ENCODE measurements at regions of chr16 and their contacts with region 1.

Region 1: DNA sequence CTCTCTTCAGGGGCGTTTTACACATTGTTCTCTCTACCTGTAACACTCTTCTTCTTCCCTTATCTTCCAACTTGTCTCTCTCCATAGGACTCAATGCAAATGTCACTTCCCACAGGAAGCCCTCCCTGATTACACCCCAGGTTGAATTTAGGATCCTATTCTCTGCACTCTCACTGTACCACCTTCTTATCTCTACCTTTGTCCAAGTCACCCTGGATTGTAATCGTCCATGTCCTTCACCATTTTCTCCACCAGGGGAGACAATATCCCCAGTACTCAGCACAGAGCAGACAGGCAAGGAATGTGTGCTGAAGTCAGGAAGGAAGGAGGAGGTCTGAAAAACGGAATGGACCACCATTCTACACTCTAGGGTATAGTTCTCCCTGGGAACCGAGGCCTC is 14.1 kb downstream of the C16orf82 start:
- DNase-seq: no peak
- ATAC-seq: no peak
- H3K4me3 ChIP-seq: no peak overlapping the region
- H3K27ac ChIP-seq: no peak overlapping the region
- H3K4me1 ChIP-seq: no peaks in the 10 kb centered on the region
- H3K27me3 ChIP-seq: peaks cover 5 to 68% (median 53%) of the 10 kb centered on the region in 7 donors
- CTCF ChIP-seq: peak in 5 of 9 donors; percentile 23 to 36 (median 26)

Region 2: GRCh38 chr16:27027971-27028370 is 52.9 kb before region 1 on chr16:
- intact Hi-C with region 1: loop called in 1 of 10 experiments (anchors 10 kb)
- DNase-seq: no peak
- ATAC-seq: no peak
- H3K4me3 ChIP-seq: no peak overlapping the region
- H3K27ac ChIP-seq: no peak overlapping the region
- H3K4me1 ChIP-seq: no peaks in the 10 kb centered on the region
- H3K27me3 ChIP-seq: peaks cover 0 to 8% (median 0%) of the 10 kb centered on the region in 7 donors
- CTCF ChIP-seq: no peak